ENCODE measurements at regions of chr11 and their contacts with region 1.

Region 1: DNA sequence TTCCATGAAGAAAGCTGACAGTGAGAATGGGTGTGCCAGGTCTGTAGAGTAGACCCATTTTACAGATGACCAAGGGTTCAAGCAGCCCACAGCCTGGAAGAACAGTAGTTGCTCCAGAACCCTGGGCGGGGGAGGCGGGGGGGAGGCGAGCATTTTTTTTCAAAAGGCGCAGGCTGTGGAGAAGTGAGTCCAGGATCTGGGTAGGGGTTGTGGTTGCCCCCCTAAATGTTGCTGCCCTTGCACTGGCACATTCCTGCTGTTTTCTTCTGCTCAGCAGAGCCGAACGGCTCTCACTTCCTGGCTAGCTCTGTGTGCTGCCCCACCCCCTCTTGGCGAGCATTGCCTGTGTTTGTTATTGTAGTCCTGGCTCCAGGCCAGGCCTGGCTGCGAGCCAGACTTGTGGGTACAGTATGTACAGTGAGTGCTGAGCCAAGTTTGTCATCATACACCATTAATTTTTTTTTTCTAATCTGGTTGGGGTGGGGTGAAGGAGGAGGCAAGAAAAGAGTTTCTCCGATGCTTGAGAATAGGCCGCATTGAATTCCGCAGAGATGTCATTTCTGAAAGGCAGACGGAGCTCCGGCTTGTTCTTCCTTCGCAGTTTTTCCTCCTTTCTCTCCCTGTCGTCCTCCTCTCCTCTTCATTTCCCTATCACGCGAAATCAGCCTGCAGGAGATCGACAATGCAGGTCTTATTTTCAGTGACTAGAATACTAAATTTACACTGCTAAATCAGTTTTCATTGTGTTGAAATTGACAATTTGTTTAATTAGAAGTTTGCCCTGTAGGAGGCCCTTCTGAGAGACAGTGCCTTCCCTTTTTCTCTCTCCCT is 100.5 kb downstream of the ZBTB16 start:
- ATAC-seq: peak; percentile 81 to 95 (median 90)
- H3K4me3 ChIP-seq: no peak overlapping the region
- H3K27ac ChIP-seq: no peak overlapping the region
- H3K4me1 ChIP-seq: peaks cover 35 to 45% of the 10 kb centered on the region in 2 donors

Region 2: GRCh38 chr11:114044042-114044871 is 115.8 kb before region 1 on chr11:
- in situ Hi-C with region 1: no loop called
- ATAC-seq: peak in 1 of 8 experiments; percentile 23
- H3K4me3 ChIP-seq: no peak overlapping the region
- H3K27ac ChIP-seq: no peak overlapping the region
- H3K4me1 ChIP-seq: peaks cover 6 to 8% of the 10 kb centered on the region in 2 donors

Region 3: GRCh38 chr11:114059278-114059983 is 100.6 kb before region 1 on chr11 and contains the start of gene ZBTB16:
- in situ Hi-C with region 1: loop called in 1 of 9 experiments (anchors 25 kb)
- ATAC-seq: peak in 6 of 8 experiments; percentile 53 to 88 (median 84)
- H3K4me3 ChIP-seq: peak within 1 kb of the TSS; percentile 58 to 89 (median 78)
- H3K27ac ChIP-seq: peak within 1 kb of the TSS; percentile 71 to 83
- H3K4me1 ChIP-seq: peaks cover 26 to 35% of the 10 kb centered on the region in 2 donors
- total RNA-seq, gene ZBTB16: 0.07 to 26.6 (median 7.3) TPM in 7 of 8 experiments, not detected in the other

Measured in motor neuron (in vitro differentiated cells).